Naive thymus-derived CD4-positive, alpha-beta T cell (primary cell): ENCODE measurements at regions of chr5 and their contacts with region 1.

Region 1: DNA sequence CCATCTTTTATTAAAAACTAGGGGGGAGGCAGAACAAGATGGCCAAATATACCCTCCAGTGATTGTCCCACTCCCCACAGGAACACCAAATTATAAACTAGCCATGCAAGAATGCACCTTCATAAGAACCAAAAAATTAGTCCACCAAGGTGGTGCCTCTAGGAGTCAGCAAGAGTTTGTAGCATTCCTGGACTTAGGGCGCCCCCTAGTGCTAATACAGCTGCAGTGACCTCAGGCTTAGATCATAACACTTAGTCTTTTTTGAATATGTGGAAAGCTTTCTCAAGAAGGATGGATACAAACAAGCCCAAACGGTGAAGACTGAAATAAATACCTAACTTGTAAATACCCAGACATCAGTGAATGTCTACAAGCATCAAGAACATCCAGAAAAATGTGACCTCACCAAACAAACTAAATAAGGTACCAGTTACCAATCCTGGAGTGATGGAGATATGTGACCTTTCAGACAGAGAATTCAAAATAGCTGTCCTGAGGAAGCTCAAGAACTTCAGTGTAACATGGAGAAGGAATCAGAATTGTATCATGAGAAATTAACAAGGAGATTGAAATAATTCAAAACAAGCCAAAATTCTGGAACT is 19.3 kb downstream of the PPIP5K2 start:
- DNase-seq: peak; percentile 59 to 86 (median 78)
- ATAC-seq: peak; percentile 99
- H3K4me3 ChIP-seq: no peak overlapping the region
- H3K4me3 Mint-ChIP-seq: no peak overlapping the region
- H3K27ac ChIP-seq: no peak overlapping the region
- H3K27ac Mint-ChIP-seq: peak overlapping the region in 1 of 9 donors; percentile 51
- H3K4me1 ChIP-seq: no peaks in the 10 kb centered on the region
- H3K4me1 Mint-ChIP-seq: peaks cover 1 to 11% (median 4%) of the 10 kb centered on the region in 7 donors
- H3K27me3 ChIP-seq: no peaks in the 10 kb centered on the region
- H3K27me3 Mint-ChIP-seq: no peaks in the 10 kb centered on the region

Region 2: DNA sequence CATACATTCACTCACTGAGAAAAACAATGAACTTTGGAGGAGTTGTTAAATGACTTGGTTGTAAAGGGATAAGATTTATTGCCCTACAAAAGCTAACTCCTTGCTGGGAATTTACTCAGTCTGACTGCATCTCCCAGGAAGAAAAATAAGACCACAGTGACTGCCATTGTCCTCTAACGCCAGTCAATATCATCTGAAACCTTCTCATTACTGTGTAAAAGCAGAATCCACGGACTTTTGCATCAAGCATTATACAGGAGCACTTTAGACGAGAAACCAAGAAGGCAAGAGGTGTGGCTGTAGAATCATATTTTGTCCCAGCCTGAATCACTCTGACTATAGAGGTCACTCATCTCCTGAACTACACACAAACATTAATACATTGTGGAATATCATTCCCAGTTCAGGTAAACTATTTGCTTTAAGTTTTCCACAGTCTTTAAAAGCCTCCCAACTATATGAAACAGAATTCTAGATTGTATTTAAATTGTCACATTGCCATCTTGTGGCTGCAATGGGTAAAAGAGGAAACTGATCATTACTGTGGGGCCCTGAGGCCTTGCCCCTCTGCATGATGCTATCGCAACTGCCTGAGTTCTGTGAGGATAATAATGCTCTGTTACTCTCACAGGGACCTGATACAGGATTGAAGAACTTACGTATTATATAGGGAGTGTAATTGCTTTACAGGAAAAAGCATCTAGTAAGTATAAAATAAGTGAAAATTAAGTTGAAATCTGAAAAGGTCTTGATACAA is 986.2 kb before region 1 on chr5:
- CTCF ChIA-PET with region 1: no interaction called
- POLR2A ChIA-PET with region 1: no interaction called
- intact Hi-C with region 1: loop called in 1 of 2 experiments (anchors 5 kb)
- DNase-seq: peak in 3 of 9 donors; percentile 1 to 25 (median 1)
- ATAC-seq: peak; percentile 61
- H3K4me3 ChIP-seq: no peak overlapping the region
- H3K4me3 Mint-ChIP-seq: peak overlapping the region in 2 of 10 donors; percentile 19 to 46
- H3K27ac ChIP-seq: no peak overlapping the region
- H3K27ac Mint-ChIP-seq: peak overlapping the region in 1 of 9 donors; percentile 37
- H3K4me1 ChIP-seq: no peaks in the 10 kb centered on the region
- H3K4me1 Mint-ChIP-seq: no peaks in the 10 kb centered on the region
- H3K27me3 ChIP-seq: no peaks in the 10 kb centered on the region
- H3K27me3 Mint-ChIP-seq: peaks cover 0 to 5% (median 0%) of the 10 kb centered on the region in 5 donors

Region 3: GRCh38 chr5:102583276-102584124 is 555.9 kb before region 1 on chr5:
- CTCF ChIA-PET with region 1: no interaction called
- POLR2A ChIA-PET with region 1: no interaction called
- intact Hi-C with region 1: loop called (anchors 1 kb)
- DNase-seq: peak in 3 of 9 donors; percentile 0 to 7 (median 5)
- ATAC-seq: no peak
- H3K4me3 ChIP-seq: no peak overlapping the region
- H3K4me3 Mint-ChIP-seq: no peak overlapping the region
- H3K27ac ChIP-seq: no peak overlapping the region
- H3K27ac Mint-ChIP-seq: no peak overlapping the region
- H3K4me1 ChIP-seq: no peaks in the 10 kb centered on the region
- H3K4me1 Mint-ChIP-seq: no peaks in the 10 kb centered on the region
- H3K27me3 ChIP-seq: no peaks in the 10 kb centered on the region
- H3K27me3 Mint-ChIP-seq: peaks cover 0 to 11% (median 6%) of the 10 kb centered on the region in 5 donors

Region 4: DNA sequence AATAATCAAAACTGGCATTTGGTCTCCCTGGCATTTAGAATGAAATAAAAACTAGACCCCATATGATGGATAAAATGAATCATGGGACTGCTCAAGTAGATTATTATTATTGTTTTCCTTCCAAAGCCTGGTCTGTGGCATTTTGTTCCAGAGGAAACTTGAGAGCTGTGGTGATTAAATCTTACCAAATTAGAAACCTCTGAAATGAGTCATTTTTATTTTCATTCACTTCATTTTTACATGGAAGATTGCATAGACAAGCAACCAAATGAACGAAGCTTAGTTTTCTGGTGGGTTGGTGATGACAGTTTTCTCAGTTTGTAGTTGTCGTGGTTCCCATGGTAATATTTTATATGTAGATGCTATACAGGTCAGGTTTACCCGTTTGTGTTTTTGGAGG is 360.9 kb before region 1 on chr5:
- CTCF ChIA-PET with region 1: interaction called, 18 read pairs
- POLR2A ChIA-PET with region 1: no interaction called
- intact Hi-C with region 1: loop called (anchors 1 kb)
- DNase-seq: no peak
- ATAC-seq: no peak
- H3K4me3 ChIP-seq: no peak overlapping the region
- H3K4me3 Mint-ChIP-seq: no peak overlapping the region
- H3K27ac ChIP-seq: no peak overlapping the region
- H3K27ac Mint-ChIP-seq: peak overlapping the region in 1 of 9 donors; percentile 15
- H3K4me1 ChIP-seq: no peaks in the 10 kb centered on the region
- H3K4me1 Mint-ChIP-seq: peaks cover 0 to 41% (median 15%) of the 10 kb centered on the region in 7 donors
- H3K27me3 ChIP-seq: no peaks in the 10 kb centered on the region
- H3K27me3 Mint-ChIP-seq: no peaks in the 10 kb centered on the region

Region 5: GRCh38 chr5:103066326-103066725 is 73.0 kb before region 1 on chr5:
- CTCF ChIA-PET with region 1: interaction called, 3 read pairs
- POLR2A ChIA-PET with region 1: no interaction called
- intact Hi-C with region 1: loop called (anchors 1 to 2 kb)
- DNase-seq: no peak
- ATAC-seq: peak; percentile 42
- H3K4me3 ChIP-seq: no peak overlapping the region
- H3K4me3 Mint-ChIP-seq: no peak overlapping the region
- H3K27ac ChIP-seq: no peak overlapping the region
- H3K27ac Mint-ChIP-seq: no peak overlapping the region
- H3K4me1 ChIP-seq: no peaks in the 10 kb centered on the region
- H3K4me1 Mint-ChIP-seq: no peaks in the 10 kb centered on the region
- H3K27me3 ChIP-seq: no peaks in the 10 kb centered on the region
- H3K27me3 Mint-ChIP-seq: peaks cover 0 to 12% (median 5%) of the 10 kb centered on the region in 5 donors

Region 6: DNA sequence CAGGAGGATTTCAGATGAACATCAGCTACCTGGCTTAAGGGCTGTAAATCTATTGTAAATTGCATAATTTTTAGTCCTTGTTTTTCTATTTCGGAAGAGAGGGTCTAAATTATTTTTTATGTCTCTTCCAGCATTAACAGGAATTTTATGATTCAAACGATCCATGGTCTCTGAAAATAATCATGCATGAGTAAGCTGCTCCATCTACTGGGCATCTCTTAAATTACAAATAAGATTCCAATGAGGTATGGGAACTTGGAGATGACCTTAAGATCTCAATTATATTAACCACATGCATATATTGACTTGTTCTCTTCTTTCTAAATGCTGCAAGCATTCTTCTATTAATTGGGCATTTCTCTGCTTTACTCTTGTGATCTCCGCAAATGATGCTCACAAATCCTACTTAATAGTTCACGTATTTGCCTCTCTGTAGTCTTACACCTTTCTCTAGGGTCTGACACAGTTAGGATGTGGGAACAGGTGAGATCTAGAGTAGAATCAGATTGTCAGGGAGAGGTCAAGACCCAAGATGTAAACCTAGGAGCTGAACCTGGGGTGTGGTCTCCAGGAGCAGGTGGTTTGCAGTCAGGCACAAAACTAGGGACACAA is 336.4 kb after region 1 on chr5:
- CTCF ChIA-PET with region 1: no interaction called
- POLR2A ChIA-PET with region 1: no interaction called
- intact Hi-C with region 1: loop called in 1 of 2 experiments (anchors 10 kb)
- DNase-seq: peak in 5 of 9 donors; percentile 11 to 33 (median 18)
- ATAC-seq: peak; percentile 49
- H3K4me3 ChIP-seq: no peak overlapping the region
- H3K4me3 Mint-ChIP-seq: no peak overlapping the region
- H3K27ac ChIP-seq: no peak overlapping the region
- H3K27ac Mint-ChIP-seq: no peak overlapping the region
- H3K4me1 ChIP-seq: no peaks in the 10 kb centered on the region
- H3K4me1 Mint-ChIP-seq: no peaks in the 10 kb centered on the region
- H3K27me3 ChIP-seq: no peaks in the 10 kb centered on the region
- H3K27me3 Mint-ChIP-seq: peaks cover 11 to 22% (median 16%) of the 10 kb centered on the region in 5 donors